BJ (cell line): ENCODE measurements at regions of chr3 and their contacts with region 1.

Region 1: DNA sequence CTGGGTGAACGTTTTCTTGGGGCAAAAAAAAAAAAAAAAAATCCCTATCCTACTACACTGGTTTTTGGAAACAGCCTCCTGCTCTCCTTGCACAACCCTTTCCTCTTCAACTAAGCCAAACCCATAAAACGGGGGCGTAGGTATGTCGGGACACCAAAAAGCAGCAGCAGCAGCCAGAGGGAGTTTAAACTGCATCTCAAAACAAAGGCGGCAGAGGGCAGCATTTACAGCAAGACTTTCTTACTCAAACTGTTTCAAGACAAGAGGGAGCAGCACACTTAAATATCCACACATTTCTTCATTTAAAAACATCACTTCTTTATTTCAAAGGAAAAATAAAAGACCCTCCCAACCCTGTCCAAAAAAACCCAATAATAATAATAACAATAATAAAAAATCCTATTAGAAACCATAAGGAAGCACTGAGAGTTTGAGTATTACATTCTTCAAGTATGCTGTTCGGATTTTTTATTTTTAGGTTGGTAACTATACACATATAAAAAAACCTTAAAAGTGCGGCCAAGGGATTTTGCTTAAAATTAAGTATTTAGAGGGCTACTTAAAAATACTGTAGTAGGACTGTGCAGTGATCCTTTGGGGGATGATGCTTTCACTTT is 43.9 kb upstream of the PLXND1 start:
- DNase-seq: peak; percentile 80
- H3K4me3 ChIP-seq: no peak overlapping the region
- H3K27me3 ChIP-seq: no peaks in the 10 kb centered on the region; the same call in 1 of the 2 replicates
- CTCF ChIP-seq: peak; percentile 71

Region 2: GRCh38 chr3:129934234-129935123 is 284.1 kb after region 1 on chr3:
- CTCF ChIA-PET with region 1: interaction called, 11 read pairs
- POLR2A ChIA-PET with region 1: no interaction called
- DNase-seq: no peak
- H3K4me3 ChIP-seq: no peak overlapping the region
- H3K27me3 ChIP-seq: 0 out of 2 replicates have a peak, but pooled peaks cover 1% of the 10 kb centered on the region
- CTCF ChIP-seq: peak; percentile 85